HepG2 (cell line): ENCODE measurements at regions of chr1 and their contacts with region 1.

Region 1: DNA sequence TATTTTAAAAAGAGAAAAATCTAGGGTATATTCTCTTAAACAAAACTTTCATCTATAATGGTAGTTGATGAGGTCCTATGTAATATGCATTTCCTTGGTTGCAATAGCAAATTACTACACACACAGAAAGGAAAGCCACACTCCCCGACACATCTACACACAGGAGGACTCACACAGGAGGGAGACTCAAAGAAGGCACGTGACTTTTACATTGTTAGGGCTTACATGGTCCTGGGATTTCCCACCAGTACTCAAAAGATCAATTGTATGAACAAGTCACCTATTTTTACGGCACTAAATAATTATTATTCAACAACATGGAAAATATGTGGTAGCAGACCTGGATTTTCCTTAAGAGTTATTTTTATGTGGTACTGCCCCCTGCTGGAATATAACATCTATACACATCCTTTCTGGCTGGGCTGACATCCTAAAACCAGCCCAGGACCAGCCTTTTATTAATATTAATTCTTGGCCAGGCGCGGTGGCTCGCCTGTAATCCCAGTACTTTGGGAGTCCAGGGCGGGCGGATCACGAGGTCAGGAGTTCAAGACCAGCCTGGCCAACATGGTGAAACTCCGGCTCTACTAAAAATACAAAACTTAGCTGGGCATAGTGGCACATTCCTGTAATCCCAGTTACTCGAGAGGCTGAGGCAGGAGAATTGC is 33.9 kb upstream of the LGALS8 start:
- DNase-seq: peak; percentile 74
- ATAC-seq: peak; percentile 23; the same call in 1 of the 3 replicates
- H3K4me3 ChIP-seq: peak overlapping the region; percentile 47 to 55 (median 51); a peak in 3 of 6 replicates
- H3K27ac ChIP-seq: peak overlapping the region; percentile 89
- H3K4me1 ChIP-seq: peaks cover 53% of the 10 kb centered on the region
- H3K27me3 ChIP-seq: no peaks in the 10 kb centered on the region
- CTCF ChIP-seq: peak; percentile 66
- EP300 ChIP-seq: no peak
- POLR2A ChIP-seq: no peak
- RAD21 ChIP-seq: no peak; the same call in 1 of the 2 replicates

Region 2: DNA sequence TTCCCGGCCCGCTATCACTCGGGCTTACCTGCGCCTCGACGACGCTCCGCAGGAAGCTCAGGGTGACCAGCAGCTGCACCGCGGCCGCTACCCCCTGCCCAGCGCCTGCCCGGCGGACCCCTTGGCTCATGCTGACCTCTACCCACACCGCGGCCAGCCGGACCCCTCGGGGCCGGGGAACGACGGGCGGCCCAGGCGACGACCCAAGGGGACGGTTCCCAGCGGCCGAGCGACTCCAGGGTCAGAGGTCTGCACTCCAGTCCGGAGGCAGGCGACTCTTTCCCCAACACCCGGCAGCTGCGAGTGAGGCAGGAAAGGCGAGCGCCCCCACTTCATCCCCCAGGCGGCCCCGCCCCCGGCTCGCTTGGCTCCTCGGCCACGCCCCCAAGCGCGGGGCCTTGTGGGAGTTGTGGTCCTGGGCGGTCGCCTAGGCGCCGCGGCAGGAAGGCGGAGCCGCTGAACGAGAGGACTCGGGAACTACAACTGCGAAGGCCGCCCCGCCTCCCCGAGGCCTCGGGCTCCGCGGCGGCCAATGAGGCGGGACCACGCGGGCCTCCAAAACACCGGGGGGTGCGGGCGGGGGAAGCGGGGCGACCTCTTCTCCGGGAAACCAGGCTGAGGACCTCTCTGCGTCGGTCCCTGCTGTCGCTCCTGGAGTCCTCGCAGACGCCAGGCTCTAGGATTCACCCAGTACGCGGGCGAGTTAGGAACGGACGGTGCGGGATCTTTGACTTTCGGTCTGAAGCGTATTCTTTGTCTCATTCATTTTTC is 208.0 kb before region 1 on chr1 and contains the start of gene ERO1B:
- CTCF ChIA-PET with region 1: no interaction called
- POLR2A ChIA-PET with region 1: no interaction called
- in situ Hi-C with region 1: no loop called
- intact Hi-C with region 1: loop called (anchors 5 kb)
- DNase-seq: peak; percentile 89
- ATAC-seq: peak; percentile 97
- H3K4me3 ChIP-seq: peak within 1 kb of the TSS; percentile 61 to 90 (median 85)
- H3K27ac ChIP-seq: no peak within 1 kb of the TSS
- H3K4me1 ChIP-seq: peaks cover 17% of the 10 kb centered on the region
- H3K27me3 ChIP-seq: peaks cover 4 to 22% of the 10 kb centered on the region in 2 experiments; a peak in 3 of 5 replicates
- CTCF ChIP-seq: peak; percentile 51
- EP300 ChIP-seq: no peak
- POLR2A ChIP-seq: peak; percentile 75 to 88
- RAD21 ChIP-seq: no peak
- total RNA-seq, gene ERO1B: 0.86 and 1.6 TPM in 2 replicates

Region 3: GRCh38 chr1:236394905-236395780 is 94.7 kb before region 1 on chr1:
- CTCF ChIA-PET with region 1: no interaction called
- POLR2A ChIA-PET with region 1: interaction called, 9 read pairs
- in situ Hi-C with region 1: no loop called
- intact Hi-C with region 1: loop called (anchors 5 kb)
- DNase-seq: no peak
- ATAC-seq: no peak
- H3K4me3 ChIP-seq: peak overlapping the region; percentile 49 to 71 (median 70); a peak in 5 of 6 replicates
- H3K27ac ChIP-seq: no peak overlapping the region
- H3K4me1 ChIP-seq: peaks cover 38% of the 10 kb centered on the region
- H3K27me3 ChIP-seq: peaks cover 7 to 58% of the 10 kb centered on the region in 2 experiments
- CTCF ChIP-seq: no peak
- EP300 ChIP-seq: no peak
- POLR2A ChIP-seq: no peak
- RAD21 ChIP-seq: no peak

Region 4: GRCh38 chr1:236502885-236503639 is 13.2 kb after region 1 on chr1:
- CTCF ChIA-PET with region 1: no interaction called
- POLR2A ChIA-PET with region 1: interaction called, 42 read pairs
- in situ Hi-C with region 1: no loop called
- intact Hi-C with region 1: loop called (anchors 1 kb)
- DNase-seq: peak; percentile 91
- ATAC-seq: peak; percentile 94
- H3K4me3 ChIP-seq: peak overlapping the region in 1 of 3 experiments; percentile 25; a peak in 1 of 6 replicates
- H3K27ac ChIP-seq: peak overlapping the region; percentile 89
- H3K4me1 ChIP-seq: peaks cover 78% of the 10 kb centered on the region
- H3K27me3 ChIP-seq: no peaks in the 10 kb centered on the region
- CTCF ChIP-seq: no peak
- EP300 ChIP-seq: peak in 1 of 2 experiments; percentile 72; a peak in 1 of 4 replicates
- POLR2A ChIP-seq: peak; percentile 53 to 56
- RAD21 ChIP-seq: no peak

Region 5: DNA sequence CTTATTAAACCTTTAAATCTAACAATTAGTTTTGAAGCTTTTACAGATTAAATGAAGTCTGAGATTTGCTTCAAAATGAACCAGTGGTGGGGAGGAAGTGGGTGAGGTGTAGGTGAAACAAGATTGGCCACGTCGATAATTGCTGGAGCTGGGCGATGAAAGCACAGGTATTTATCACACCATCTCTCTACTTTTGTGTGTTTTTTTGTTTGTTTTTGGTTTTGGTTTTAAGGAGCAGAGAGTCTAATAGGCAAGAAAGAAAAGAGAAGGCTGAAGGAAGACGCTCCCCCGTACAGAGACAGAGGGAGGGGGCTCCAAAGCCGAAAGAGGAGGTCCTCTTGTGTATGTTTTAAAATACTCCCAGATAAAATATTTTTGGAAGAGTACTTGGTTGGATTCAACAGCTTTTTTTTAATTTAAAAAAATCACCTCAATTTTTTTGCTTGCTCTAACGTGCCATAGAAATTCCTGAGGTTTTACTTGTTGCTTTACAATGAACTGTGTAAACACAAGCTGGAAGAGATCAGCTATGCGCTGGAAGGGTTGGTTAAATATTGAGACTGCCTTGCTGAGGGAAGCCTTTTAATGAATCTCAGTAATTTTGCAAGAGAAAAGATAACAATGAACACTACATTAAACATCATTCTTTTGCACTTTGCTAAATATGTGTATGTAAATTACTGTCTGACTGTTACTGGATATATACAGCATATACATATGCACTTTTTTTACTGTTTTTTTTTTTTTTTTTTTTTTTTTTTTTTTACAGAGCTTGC is 27.3 kb after region 1 on chr1:
- CTCF ChIA-PET with region 1: no interaction called
- POLR2A ChIA-PET with region 1: interaction called, 40 read pairs
- in situ Hi-C with region 1: no loop called
- intact Hi-C with region 1: loop called (anchors 1 kb)
- DNase-seq: peak; percentile 93
- ATAC-seq: peak; percentile 87
- H3K4me3 ChIP-seq: peak overlapping the region; percentile 25 to 50 (median 30); a peak in 5 of 6 replicates
- H3K27ac ChIP-seq: peak overlapping the region; percentile 81
- H3K4me1 ChIP-seq: peaks cover 97% of the 10 kb centered on the region
- H3K27me3 ChIP-seq: no peaks in the 10 kb centered on the region
- CTCF ChIP-seq: no peak
- EP300 ChIP-seq: peak in 1 of 2 experiments; percentile 65; a peak in 2 of 4 replicates
- POLR2A ChIP-seq: no peak
- RAD21 ChIP-seq: no peak

Region 6: DNA sequence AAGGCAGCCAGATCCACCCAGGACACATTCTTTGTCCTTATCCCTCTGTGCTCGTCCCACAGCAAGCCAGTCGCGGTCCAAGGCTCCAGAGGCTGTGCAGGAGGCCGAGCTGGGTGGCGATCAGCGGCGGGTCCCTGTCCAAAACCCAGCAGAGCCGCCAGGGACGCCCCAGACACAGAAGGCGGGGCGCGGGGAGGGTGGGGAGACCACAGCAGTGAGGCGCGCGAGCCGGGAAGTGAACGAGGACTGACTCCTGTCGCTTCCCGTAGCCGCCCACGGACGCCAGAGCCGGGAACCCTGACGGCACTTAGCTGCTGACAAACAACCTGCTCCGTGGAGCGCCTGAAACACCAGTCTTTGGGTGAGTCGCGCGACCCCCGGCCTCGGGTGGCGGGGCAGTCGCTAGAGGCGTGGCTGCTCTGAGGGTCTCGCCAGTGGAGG is 33.9 kb after region 1 on chr1 and contains the start of gene LGALS8:
- CTCF ChIA-PET with region 1: no interaction called
- POLR2A ChIA-PET with region 1: interaction called, 26 read pairs
- in situ Hi-C with region 1: no loop called
- intact Hi-C with region 1: loop called (anchors 2 kb)
- DNase-seq: peak; percentile 43
- ATAC-seq: peak; percentile 74
- H3K4me3 ChIP-seq: peak within 1 kb of the TSS; percentile 74 to 95 (median 80)
- H3K27ac ChIP-seq: peak within 1 kb of the TSS; percentile 93
- H3K4me1 ChIP-seq: peaks cover 70% of the 10 kb centered on the region
- H3K27me3 ChIP-seq: no peaks in the 10 kb centered on the region; a peak in 1 of 5 replicates
- CTCF ChIP-seq: no peak
- EP300 ChIP-seq: no peak
- POLR2A ChIP-seq: peak in 1 of 2 experiments; percentile 51; a peak in 1 of 4 replicates
- RAD21 ChIP-seq: no peak
- total RNA-seq, gene LGALS8: 29.3 and 42.1 TPM in 2 replicates

Region 7: GRCh38 chr1:236534151-236534651 is 44.4 kb after region 1 on chr1:
- CTCF ChIA-PET with region 1: interaction called, 3 read pairs
- POLR2A ChIA-PET with region 1: interaction called, 10 read pairs
- in situ Hi-C with region 1: no loop called
- intact Hi-C with region 1: loop called (anchors 1 kb)
- DNase-seq: no peak
- ATAC-seq: no peak
- H3K4me3 ChIP-seq: no peak overlapping the region
- H3K27ac ChIP-seq: no peak overlapping the region
- H3K4me1 ChIP-seq: peaks cover 63% of the 10 kb centered on the region
- H3K27me3 ChIP-seq: no peaks in the 10 kb centered on the region
- CTCF ChIP-seq: no peak
- EP300 ChIP-seq: no peak
- POLR2A ChIP-seq: no peak
- RAD21 ChIP-seq: no peak